A549 (cell line): ENCODE measurements at regions of chr12 and their contacts with region 1.

Region 1: DNA sequence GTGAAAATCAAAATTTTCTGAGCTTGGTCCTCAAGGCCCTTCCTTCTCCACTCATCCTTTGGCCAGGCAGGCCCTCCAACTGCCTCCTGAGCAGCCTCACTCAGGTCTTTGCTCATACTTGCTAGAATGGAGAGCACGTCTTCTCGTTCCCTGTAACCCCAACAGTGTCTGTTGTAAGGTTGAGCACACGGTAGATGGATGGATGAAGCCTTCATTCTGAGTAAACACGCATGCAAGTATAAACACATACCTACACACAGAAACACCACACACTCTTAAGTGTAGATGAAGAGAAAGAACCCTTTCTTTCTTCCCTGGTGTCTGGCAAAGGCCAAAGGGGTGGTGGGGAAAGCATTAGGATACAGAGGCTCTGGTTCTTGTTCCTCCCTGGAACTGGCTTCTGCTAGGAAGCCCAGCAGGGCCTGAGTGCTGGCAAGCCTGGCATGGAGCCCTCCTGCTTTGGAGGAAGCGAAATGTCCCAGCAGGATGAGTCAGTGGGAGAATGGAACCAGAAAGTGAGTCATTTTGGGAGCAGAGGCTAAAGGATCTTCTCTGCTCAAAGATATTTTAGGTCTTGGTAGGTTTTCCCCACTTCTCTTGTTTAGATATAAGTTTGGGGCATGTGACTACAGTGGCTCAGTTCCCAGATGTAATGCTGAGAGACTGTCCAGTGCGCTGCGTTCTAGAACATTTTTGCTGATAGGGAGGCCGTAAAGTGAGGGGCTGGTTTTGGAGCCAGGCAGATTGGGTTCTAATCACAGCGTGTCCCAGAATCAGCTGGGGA is 127.4 kb downstream of the CACNA1C start:
- DNase-seq: peak; percentile 12 to 31
- ATAC-seq: peak; percentile 55 to 56; a peak in 3 of 6 replicates
- H3K4me3 ChIP-seq: no peak overlapping the region
- H3K27ac ChIP-seq: no peak overlapping the region
- H3K4me1 ChIP-seq: no peaks in the 10 kb centered on the region
- CTCF ChIP-seq: no peak
- EP300 ChIP-seq: no peak
- POLR2A ChIP-seq: no peak
- RAD21 ChIP-seq: no peak

Region 2: GRCh38 chr12:2126676-2127406 is 53.3 kb before region 1 on chr12:
- CTCF ChIA-PET with region 1: no interaction called
- POLR2A ChIA-PET with region 1: interaction called, 11 read pairs
- DNase-seq: no peak
- ATAC-seq: no peak
- H3K4me3 ChIP-seq: no peak overlapping the region
- H3K27ac ChIP-seq: no peak overlapping the region
- H3K4me1 ChIP-seq: no peaks in the 10 kb centered on the region
- CTCF ChIP-seq: no peak
- EP300 ChIP-seq: no peak
- POLR2A ChIP-seq: no peak
- RAD21 ChIP-seq: no peak

Region 3: DNA sequence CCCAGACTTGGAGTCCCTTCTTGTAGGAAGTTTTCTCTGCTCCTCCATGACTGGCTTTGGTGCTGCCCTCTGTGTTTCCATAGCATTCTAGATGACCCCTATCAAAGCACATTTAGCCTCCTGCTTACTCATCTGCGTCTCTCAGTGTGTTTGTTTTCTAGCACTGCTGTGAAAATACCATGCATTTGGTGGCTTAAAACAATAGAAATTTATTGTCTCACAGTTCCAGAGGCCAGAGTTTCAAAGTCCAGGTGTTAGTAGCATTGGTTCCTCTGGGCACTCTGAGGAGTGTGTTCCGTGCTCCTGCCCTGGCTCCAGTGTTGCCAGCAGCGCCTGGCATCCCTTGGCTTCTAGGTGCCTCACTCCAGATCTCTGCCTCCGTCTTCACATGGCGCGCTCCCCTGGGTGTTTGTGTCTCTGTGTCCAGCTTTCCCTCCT is 41.3 kb before region 1 on chr12:
- CTCF ChIA-PET with region 1: no interaction called
- POLR2A ChIA-PET with region 1: no interaction called
- DNase-seq: no peak
- ATAC-seq: no peak
- H3K4me3 ChIP-seq: no peak overlapping the region
- H3K27ac ChIP-seq: no peak overlapping the region
- H3K4me1 ChIP-seq: no peaks in the 10 kb centered on the region
- CTCF ChIP-seq: no peak
- EP300 ChIP-seq: no peak
- POLR2A ChIP-seq: no peak
- RAD21 ChIP-seq: no peak

Region 4: GRCh38 chr12:2467447-2468195 is 287.5 kb after region 1 on chr12:
- CTCF ChIA-PET with region 1: no interaction called
- POLR2A ChIA-PET with region 1: no interaction called
- DNase-seq: no peak
- ATAC-seq: no peak
- H3K4me3 ChIP-seq: no peak overlapping the region
- H3K27ac ChIP-seq: no peak overlapping the region
- H3K4me1 ChIP-seq: no peaks in the 10 kb centered on the region
- CTCF ChIP-seq: no peak
- EP300 ChIP-seq: no peak
- POLR2A ChIP-seq: no peak
- RAD21 ChIP-seq: no peak